ENCODE measurements at regions of chr11 and their contacts with region 1.

Region 1: GRCh38 chr11:355581-356458 is 13.5 kb upstream of the B4GALNT4 start:
- DNase-seq: peak; percentile 79 to 96
- H3K4me3 ChIP-seq: peak overlapping the region; percentile 38 to 54
- H3K27ac ChIP-seq: peak overlapping the region; percentile 92 to 98
- H3K4me1 ChIP-seq: peaks cover 26 to 31% of the 10 kb centered on the region in 2 donors
- H3K27me3 ChIP-seq: no peaks in the 10 kb centered on the region
- CTCF ChIP-seq: no peak

Region 2: DNA sequence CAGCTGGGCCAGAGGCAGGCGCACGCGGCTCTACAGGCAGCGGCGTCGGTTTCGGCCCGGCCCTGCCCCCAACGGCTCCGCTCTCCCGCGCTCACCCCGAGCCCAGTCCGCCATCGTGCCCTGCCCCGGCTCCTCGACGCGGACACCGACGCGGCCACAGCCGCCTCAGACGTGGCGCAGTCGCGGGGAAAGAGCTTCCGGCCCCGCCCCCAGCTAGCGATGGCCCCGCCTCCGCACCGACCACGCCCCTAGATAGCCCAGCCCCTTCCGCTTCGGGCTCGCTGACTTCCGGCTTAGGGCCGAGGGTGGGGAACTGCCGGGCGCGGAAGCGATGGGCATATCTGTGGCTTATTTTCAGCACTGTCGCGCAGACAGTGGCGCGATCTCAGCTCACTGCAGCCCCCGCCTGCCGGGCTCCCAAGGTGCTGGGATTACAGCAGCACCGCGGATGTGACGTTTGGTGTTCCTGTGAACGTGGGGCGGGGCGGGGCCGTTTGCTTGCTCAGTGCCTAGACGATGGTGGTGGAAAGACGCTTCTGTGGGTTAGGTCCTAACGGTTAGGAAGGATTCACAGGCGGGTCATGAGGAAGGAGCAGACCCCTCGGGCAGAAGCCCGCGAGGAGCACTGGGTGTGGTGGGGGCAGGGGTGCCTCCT is 148.5 kb before region 1 on chr11 and contains the starts of genes BET1L and RIC8A:
- intact Hi-C with region 1: loop called (anchors 2 kb)
- DNase-seq: peak; percentile 95 to 99
- H3K4me3 ChIP-seq: peak within 1 kb of the TSS; percentile 88 to 99
- H3K27ac ChIP-seq: peak within 1 kb of the TSS; percentile 99
- H3K4me1 ChIP-seq: peaks cover 17 to 47% of the 10 kb centered on the region in 2 donors
- H3K27me3 ChIP-seq: no peaks in the 10 kb centered on the region
- CTCF ChIP-seq: no peak
- total RNA-seq, gene BET1L: 42.3 TPM
- total RNA-seq, gene RIC8A: 102 TPM

Region 3: GRCh38 chr11:236774-237767 is 118.7 kb before region 1 on chr11 and contains the start of gene PSMD13:
- intact Hi-C with region 1: loop called (anchors 2 kb)
- DNase-seq: peak; percentile 32 to 92
- H3K4me3 ChIP-seq: peak within 1 kb of the TSS; percentile 96 to 99
- H3K27ac ChIP-seq: peak within 1 kb of the TSS; percentile 98
- H3K4me1 ChIP-seq: peaks cover 8 to 15% of the 10 kb centered on the region in 2 donors
- H3K27me3 ChIP-seq: no peaks in the 10 kb centered on the region
- CTCF ChIP-seq: no peak
- total RNA-seq, gene PSMD13: 50.2 TPM

Region 4: DNA sequence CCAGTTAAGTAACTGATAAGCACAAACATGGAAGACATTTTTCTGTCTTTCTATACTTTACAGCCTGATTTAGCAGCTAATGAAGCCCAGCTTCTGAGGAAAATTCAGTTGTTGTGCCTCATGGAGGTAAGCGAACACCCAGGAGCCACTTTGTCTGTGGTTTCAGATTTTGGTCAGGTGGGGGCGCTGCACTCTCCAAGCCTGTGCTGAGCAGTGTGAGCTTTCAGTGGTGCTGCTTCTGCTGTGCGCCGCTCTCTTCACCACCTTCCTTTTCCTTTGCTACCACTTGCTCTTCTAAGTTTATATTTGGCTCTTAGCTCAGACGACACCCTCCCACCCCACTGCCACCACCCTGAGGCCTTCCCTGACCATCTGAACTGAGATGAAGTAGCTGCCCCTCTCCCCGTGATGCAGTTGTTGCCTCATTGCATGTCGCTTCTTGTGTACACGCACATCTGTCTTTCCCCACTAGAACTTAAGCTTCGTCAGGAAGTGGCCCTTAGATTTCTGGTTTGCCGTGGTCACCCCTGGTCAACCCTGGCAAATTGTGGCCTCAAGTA is 105.0 kb before region 1 on chr11:
- intact Hi-C with region 1: loop called (anchors 5 kb)
- DNase-seq: peak in 1 of 2 donors; percentile 74
- H3K4me3 ChIP-seq: no peak overlapping the region
- H3K27ac ChIP-seq: no peak overlapping the region
- H3K4me1 ChIP-seq: no peaks in the 10 kb centered on the region
- H3K27me3 ChIP-seq: no peaks in the 10 kb centered on the region
- CTCF ChIP-seq: peak; percentile 52 to 69 (median 59)

Region 5: DNA sequence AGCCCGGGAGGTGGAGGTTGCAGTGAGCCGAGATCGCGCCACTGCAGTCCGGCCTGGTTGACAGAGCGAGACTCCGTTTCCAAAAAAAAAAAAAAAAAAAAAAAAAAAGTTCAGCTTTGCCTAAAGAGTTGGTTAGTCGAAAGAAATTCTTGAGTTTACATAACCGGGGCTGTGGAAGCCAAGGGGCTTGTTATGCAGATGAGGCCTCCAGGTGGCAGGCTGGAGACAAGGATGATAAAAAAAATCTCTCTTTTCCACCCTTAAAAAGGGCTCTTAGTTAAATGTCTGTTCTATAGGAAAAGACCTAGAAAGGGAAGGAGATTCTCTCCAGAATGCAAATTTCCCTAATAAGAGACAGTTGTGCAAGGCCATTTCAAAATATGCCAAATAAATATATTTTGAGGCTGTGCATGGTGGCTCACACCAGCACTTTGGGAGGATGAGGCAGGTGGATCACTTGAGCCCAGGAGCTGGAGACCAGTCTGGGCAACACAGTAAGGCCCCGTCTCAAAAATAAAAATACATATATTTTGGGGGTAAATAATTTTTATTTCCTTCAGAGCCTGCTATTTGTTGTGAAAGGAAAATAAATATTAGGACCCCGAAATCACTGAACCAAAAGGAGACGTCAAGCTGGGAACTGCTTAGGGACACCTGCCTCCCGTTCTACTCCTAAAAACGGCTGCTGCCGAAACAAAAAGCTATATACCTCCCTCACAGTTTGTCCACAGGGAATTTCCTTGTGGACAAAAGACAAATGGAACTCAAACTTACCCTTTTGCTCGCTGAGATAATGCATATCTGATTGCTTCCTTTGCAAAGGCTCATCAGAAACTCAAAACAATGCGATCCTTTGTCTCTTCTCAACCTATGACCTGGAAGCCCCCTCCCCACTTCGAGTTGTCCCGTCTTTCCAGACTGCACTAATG is 50.6 kb before region 1 on chr11:
- intact Hi-C with region 1: loop called (anchors 1 kb)
- DNase-seq: peak in 1 of 2 donors; percentile 85
- H3K4me3 ChIP-seq: no peak overlapping the region
- H3K27ac ChIP-seq: peak overlapping the region in 1 of 2 donors; percentile 86
- H3K4me1 ChIP-seq: peaks cover 7 to 35% of the 10 kb centered on the region in 2 donors
- H3K27me3 ChIP-seq: no peaks in the 10 kb centered on the region
- CTCF ChIP-seq: peak; percentile 58 to 65 (median 64)

Region 6: GRCh38 chr11:316031-316701 is 39.7 kb before region 1 on chr11:
- intact Hi-C with region 1: loop called (anchors 1 kb)
- DNase-seq: no peak
- H3K4me3 ChIP-seq: peak overlapping the region; percentile 47 to 62
- H3K27ac ChIP-seq: peak overlapping the region; percentile 6 to 66
- H3K4me1 ChIP-seq: peaks cover 0 to 10% of the 10 kb centered on the region in 2 donors
- H3K27me3 ChIP-seq: no peaks in the 10 kb centered on the region
- CTCF ChIP-seq: no peak

Region 7: DNA sequence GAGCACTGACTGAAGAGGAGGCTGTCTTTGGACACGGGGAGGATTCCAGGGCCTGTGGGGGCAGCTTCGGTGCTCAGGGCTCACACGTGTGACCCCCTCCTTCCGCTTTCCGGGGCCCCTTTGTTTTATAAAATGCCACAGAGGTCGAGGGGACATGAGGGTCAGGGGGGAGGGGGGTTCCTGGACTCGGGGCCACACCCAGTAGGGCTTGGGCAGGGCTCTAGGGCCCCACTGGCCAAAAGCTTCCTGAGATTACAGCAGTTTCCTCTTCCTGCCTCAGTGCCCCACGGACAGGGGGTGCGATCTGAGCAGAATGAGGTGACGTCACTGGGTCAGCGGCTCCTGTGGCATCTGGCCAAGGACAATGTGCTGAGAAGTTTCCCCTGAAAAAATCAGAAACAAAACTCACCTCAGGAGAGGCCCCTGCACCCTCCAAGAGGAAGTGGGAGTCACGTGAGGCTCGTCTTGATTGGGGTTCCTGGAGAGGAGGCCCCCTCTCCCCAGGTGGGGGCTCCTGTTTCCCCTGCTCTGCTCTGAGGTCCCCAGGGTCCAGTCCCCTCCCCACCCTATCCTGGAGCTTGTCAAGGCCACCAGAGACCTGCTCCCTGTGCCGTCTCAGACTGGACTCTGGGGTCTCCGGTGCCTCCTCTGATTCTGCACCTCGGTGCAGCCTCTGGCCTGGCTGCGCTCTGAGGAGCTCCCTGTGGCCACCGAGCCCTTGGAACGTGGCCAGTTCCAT is 28.8 kb before region 1 on chr11:
- intact Hi-C with region 1: loop called (anchors 1 kb)
- DNase-seq: peak; percentile 65 to 92
- H3K4me3 ChIP-seq: no peak overlapping the region
- H3K27ac ChIP-seq: peak overlapping the region; percentile 76 to 88
- H3K4me1 ChIP-seq: peaks cover 9 to 26% of the 10 kb centered on the region in 2 donors
- H3K27me3 ChIP-seq: no peaks in the 10 kb centered on the region
- CTCF ChIP-seq: no peak